ENCODE measurements at regions of chr9 and their contacts with region 1.

Region 1: DNA sequence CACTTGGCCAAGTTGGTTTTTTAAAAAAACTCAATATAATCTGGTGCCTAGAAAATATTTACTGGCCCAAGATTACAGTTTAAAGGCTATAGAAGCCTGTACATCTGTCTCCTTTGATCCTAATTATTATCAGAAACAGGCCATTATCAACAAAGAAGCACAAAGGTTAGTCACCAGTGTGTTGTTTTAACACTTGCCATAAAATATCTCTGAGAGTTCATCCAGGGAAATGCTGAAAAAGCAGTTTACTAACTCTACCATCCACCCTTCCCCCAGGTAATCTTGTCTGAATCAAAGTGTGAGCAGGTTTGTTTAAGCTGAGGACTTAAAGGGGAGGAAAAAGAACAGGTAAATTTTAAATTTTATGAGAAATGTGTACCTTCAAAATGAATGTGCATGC is 13.3 kb upstream of the TRPM6 start:
- DNase-seq: no peak
- H3K4me3 ChIP-seq: no peak overlapping the region
- H3K4me3 Mint-ChIP-seq: no peak overlapping the region
- H3K27ac ChIP-seq: no peak overlapping the region
- H3K27ac Mint-ChIP-seq: no peak overlapping the region
- H3K4me1 ChIP-seq: no peaks in the 10 kb centered on the region
- H3K4me1 Mint-ChIP-seq: no peaks in the 10 kb centered on the region
- H3K27me3 ChIP-seq: no peaks in the 10 kb centered on the region
- H3K27me3 Mint-ChIP-seq: peaks cover 6 to 11% of the 10 kb centered on the region in 2 donors

Region 2: GRCh38 chr9:74875656-74876413 is 25.2 kb before region 1 on chr9:
- CTCF ChIA-PET with region 1: no interaction called
- POLR2A ChIA-PET with region 1: no interaction called
- intact Hi-C with region 1: loop called (anchors 1 kb)
- DNase-seq: no peak
- H3K4me3 ChIP-seq: no peak overlapping the region
- H3K4me3 Mint-ChIP-seq: no peak overlapping the region
- H3K27ac ChIP-seq: no peak overlapping the region
- H3K27ac Mint-ChIP-seq: no peak overlapping the region
- H3K4me1 ChIP-seq: no peaks in the 10 kb centered on the region
- H3K4me1 Mint-ChIP-seq: no peaks in the 10 kb centered on the region
- H3K27me3 ChIP-seq: no peaks in the 10 kb centered on the region
- H3K27me3 Mint-ChIP-seq: peaks cover 17 to 19% of the 10 kb centered on the region in 2 donors

Region 3: DNA sequence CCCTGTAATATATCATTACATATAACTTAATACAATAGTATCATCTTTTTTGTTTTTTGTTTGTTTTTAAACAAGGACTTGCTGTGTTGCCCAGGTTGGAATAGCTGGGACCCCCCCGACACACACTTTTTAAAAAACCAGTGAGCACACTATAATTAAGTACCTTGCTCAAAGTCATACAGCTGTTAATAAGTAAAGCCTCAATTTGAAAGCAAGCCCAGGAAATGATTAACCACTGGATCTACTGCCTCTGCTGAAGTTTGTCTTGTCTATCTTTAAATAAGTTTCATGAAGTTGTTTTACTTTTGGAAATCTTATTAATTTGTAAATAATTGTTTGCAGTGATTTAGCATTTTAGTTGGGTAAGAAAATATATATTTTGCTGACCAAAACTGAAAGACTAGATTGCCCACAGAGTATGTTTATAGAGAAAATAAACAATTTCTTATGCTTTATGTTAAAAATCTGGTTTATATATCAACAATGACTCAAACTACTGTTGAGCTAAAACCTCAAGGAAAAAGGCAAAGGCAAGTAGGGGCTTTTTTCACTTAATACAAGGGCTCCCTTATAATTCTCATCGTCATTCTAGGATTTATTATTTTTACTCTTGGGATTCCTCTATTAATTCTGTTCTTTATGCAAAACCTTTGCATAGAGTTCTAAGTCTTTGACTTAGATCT is 132.9 kb after region 1 on chr9:
- CTCF ChIA-PET with region 1: no interaction called
- POLR2A ChIA-PET with region 1: no interaction called
- intact Hi-C with region 1: no loop called
- DNase-seq: no peak
- H3K4me3 ChIP-seq: no peak overlapping the region
- H3K4me3 Mint-ChIP-seq: no peak overlapping the region
- H3K27ac ChIP-seq: no peak overlapping the region
- H3K27ac Mint-ChIP-seq: no peak overlapping the region
- H3K4me1 ChIP-seq: peaks cover 2% of the 10 kb centered on the region
- H3K4me1 Mint-ChIP-seq: peaks cover 0 to 1% (median 0%) of the 10 kb centered on the region in 4 donors
- H3K27me3 ChIP-seq: no peaks in the 10 kb centered on the region
- H3K27me3 Mint-ChIP-seq: peaks cover 4 to 6% of the 10 kb centered on the region in 2 donors

Measured in CD4-positive, alpha-beta memory T cell (primary cell).